AG04449 (cell line): ENCODE measurements at regions of chr11 and their contacts with region 1.

Region 1: GRCh38 chr11:63738720-63739360 is 29.7 kb downstream of the ZFTA start:
- DNase-seq: no peak
- H3K4me3 ChIP-seq: no peak overlapping the region
- CTCF ChIP-seq: peak; percentile 70

Region 2: GRCh38 chr11:63478896-63479295 is 259.9 kb before region 1 on chr11:
- CTCF ChIA-PET with region 1: interaction called, 36 read pairs
- POLR2A ChIA-PET with region 1: no interaction called
- DNase-seq: peak; percentile 37
- H3K4me3 ChIP-seq: no peak overlapping the region
- CTCF ChIP-seq: peak; percentile 81

Region 3: DNA sequence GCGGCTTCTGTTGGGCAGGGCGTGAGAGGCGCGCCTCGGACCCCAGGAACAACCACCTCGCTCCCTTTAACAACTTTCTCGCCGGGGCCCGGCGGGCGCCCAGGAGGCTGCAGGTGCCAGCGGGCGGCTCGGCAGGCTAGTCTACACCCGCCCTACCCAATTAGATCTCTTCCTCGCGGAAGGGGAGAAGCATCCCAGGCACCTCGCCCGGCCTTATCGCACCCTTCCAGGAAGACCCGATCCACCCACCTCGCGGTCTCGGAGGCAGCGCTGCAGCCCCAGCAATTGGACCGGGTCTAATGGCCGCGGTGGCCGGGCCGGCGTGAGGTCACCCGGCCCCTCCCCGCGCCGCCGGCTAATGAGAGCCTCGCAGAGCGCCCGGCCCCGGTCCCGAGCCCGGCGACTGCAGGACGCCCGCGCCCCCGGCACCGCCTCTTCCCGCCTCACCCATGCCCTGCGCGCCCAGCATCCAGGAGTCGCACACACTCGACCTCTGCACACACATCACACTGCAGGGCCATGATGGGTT is 124.6 kb before region 1 on chr11 and contains the start of gene PLAAT3:
- CTCF ChIA-PET with region 1: no interaction called
- POLR2A ChIA-PET with region 1: no interaction called
- DNase-seq: no peak
- H3K4me3 ChIP-seq: peak within 1 kb of the TSS; percentile 61
- CTCF ChIP-seq: no peak

Region 4: DNA sequence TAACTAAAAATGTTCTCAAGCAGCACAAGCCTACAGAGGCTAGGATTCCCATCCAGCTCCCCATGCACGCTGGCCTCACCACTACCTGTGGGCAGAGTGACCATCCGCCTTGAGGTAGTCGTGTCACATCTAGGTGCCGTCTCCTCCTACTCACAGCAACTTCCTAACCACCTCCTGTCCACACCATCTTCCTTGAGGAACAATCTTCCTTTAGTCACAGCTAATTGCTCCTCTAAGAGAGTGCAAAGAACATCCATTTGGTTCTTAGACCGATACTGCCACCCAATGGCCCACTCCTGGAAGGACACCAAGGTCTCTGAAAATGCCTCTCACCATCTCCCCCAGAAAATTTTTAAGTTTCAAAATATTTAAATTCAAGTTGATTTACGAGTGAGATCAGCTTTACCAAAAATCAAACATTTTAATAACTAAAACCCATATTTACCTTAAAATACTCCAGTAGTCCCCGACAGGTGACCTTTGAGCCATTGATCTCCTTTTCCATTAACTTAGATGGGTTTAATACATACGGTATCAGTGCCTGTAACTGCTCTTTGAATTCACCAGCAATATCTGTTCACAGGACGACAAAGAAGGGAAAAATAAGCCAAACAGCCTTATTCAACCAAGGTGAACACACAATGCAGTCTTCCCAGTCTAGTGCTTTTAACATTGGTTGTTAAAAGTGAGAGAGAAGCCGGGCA is 102.9 kb before region 1 on chr11:
- CTCF ChIA-PET with region 1: interaction called, 50 read pairs
- POLR2A ChIA-PET with region 1: no interaction called
- DNase-seq: no peak
- H3K4me3 ChIP-seq: no peak overlapping the region
- CTCF ChIP-seq: peak; percentile 69

Region 5: GRCh38 chr11:63671322-63672155 is 67.3 kb before region 1 on chr11 and contains the start of gene ATL3:
- CTCF ChIA-PET with region 1: interaction called, 29 read pairs
- POLR2A ChIA-PET with region 1: no interaction called
- DNase-seq: peak; percentile 53
- H3K4me3 ChIP-seq: peak within 1 kb of the TSS; percentile 79
- CTCF ChIP-seq: peak; percentile 10

Region 6: DNA sequence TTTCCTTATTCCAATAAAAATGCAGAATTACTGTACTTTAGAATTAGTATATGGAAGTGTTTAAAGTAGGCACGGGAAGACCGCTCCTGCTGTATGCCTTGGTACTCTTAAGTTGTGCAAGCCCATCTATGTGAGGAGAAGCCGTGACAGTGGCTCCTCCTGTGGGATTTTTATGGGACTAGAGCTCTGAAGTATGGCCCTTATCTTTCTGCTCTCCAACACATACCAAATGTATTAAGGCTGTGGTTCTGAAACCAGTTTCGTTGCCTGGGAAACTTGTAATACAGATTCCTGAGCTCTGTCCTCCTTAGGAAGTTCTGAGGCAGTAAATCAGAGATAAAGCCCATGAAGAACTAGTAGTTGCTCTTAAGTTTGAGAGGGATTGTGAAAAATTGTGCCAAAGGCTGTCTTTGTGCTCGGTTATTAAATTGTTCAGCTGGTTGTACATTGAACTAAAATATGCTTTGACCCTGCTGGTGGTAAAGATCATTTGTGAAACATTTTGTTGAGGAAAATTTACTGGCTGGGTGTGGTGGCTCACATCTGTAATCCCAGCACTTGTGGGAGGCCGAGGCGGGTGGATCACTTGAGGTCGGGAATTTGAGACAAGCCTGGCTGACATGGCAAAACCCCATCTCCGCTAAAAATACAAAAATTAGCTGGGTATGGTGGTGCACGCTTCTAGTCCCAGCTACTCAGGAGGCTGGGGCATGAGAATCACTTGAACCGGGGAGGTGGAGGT is 28.2 kb before region 1 on chr11:
- CTCF ChIA-PET with region 1: interaction called, 15 read pairs
- POLR2A ChIA-PET with region 1: no interaction called
- DNase-seq: peak; percentile 74
- H3K4me3 ChIP-seq: no peak overlapping the region
- CTCF ChIP-seq: peak; percentile 33